ENCODE measurements at regions of chr11 and their contacts with region 1.

Region 1: GRCh38 chr11:78645226-78646202 is 70.8 kb upstream of the NARS2 start:
- DNase-seq: peak; percentile 72
- H3K4me3 Mint-ChIP-seq: no peak overlapping the region
- H3K27ac Mint-ChIP-seq: no peak overlapping the region
- H3K4me1 Mint-ChIP-seq: peaks cover 45% of the 10 kb centered on the region
- H3K27me3 Mint-ChIP-seq: peaks cover 1% of the 10 kb centered on the region

Region 2: DNA sequence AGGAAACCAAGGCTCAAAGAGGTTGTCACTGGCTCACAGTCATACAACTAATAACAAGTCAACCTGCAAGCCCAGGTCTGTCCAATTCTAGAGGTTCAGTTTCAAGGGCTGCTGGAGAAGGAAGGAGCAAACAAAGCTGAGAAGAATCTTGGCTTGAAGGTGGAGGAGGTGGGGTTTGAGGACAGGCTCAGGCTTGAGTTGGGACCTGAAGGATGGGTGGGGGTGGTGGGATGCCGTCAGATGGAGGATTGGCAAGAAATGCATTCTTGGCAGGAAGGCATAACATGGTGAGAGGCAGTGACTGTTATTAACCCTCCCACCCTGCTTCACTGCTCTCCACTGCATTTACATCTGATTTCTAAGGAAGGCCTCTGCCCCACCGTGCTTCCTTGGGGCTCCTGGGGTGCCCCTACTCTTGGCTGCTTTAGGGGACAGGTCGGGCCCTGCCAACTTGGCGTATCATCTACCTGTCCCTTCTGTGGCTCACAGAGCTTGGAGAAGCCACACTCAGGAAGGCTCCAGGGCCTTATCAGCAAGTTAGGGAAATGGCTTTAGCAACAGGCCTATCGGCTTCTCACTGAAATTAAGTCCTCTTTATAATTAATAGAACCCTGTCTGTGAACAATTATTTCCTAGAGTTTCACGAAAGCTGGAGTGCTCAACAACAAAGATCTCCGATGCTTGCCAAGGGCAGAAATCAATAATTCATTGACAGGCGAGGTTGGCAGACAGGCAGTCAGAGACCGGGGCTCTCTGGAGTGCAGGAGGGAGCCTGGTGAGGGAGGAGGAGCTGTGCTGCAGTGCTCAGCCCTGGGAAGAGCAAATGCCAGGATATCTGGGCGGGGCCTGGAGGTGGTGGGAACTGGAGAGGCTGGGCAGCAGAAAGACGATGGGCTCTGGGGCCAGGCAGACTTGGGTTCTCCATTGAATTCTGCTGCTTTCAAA is 14.1 kb after region 1 on chr11:
- CTCF ChIA-PET with region 1: interaction called, 51 read pairs
- POLR2A ChIA-PET with region 1: no interaction called
- intact Hi-C with region 1: no loop called
- DNase-seq: no peak
- H3K4me3 Mint-ChIP-seq: no peak overlapping the region
- H3K27ac Mint-ChIP-seq: no peak overlapping the region
- H3K4me1 Mint-ChIP-seq: no peaks in the 10 kb centered on the region
- H3K27me3 Mint-ChIP-seq: peaks cover 3% of the 10 kb centered on the region

Region 3: GRCh38 chr11:78722786-78723185 is 77.3 kb after region 1 on chr11:
- CTCF ChIA-PET with region 1: interaction called, 167 read pairs
- POLR2A ChIA-PET with region 1: no interaction called
- intact Hi-C with region 1: no loop called
- DNase-seq: no peak
- H3K4me3 Mint-ChIP-seq: no peak overlapping the region
- H3K27ac Mint-ChIP-seq: no peak overlapping the region
- H3K4me1 Mint-ChIP-seq: no peaks in the 10 kb centered on the region
- H3K27me3 Mint-ChIP-seq: no peaks in the 10 kb centered on the region

Region 4: GRCh38 chr11:78961247-78961646 is 315.7 kb after region 1 on chr11:
- CTCF ChIA-PET with region 1: interaction called, 14 read pairs
- POLR2A ChIA-PET with region 1: no interaction called
- intact Hi-C with region 1: no loop called
- DNase-seq: peak; percentile 9
- H3K4me3 Mint-ChIP-seq: no peak overlapping the region
- H3K27ac Mint-ChIP-seq: no peak overlapping the region
- H3K4me1 Mint-ChIP-seq: peaks cover 6% of the 10 kb centered on the region
- H3K27me3 Mint-ChIP-seq: peaks cover 18% of the 10 kb centered on the region

Region 5: GRCh38 chr11:78973876-78974275 is 328.4 kb after region 1 on chr11:
- CTCF ChIA-PET with region 1: no interaction called
- POLR2A ChIA-PET with region 1: no interaction called
- intact Hi-C with region 1: no loop called
- DNase-seq: no peak
- H3K4me3 Mint-ChIP-seq: no peak overlapping the region
- H3K27ac Mint-ChIP-seq: no peak overlapping the region
- H3K4me1 Mint-ChIP-seq: no peaks in the 10 kb centered on the region
- H3K27me3 Mint-ChIP-seq: peaks cover 4% of the 10 kb centered on the region

Region 6: DNA sequence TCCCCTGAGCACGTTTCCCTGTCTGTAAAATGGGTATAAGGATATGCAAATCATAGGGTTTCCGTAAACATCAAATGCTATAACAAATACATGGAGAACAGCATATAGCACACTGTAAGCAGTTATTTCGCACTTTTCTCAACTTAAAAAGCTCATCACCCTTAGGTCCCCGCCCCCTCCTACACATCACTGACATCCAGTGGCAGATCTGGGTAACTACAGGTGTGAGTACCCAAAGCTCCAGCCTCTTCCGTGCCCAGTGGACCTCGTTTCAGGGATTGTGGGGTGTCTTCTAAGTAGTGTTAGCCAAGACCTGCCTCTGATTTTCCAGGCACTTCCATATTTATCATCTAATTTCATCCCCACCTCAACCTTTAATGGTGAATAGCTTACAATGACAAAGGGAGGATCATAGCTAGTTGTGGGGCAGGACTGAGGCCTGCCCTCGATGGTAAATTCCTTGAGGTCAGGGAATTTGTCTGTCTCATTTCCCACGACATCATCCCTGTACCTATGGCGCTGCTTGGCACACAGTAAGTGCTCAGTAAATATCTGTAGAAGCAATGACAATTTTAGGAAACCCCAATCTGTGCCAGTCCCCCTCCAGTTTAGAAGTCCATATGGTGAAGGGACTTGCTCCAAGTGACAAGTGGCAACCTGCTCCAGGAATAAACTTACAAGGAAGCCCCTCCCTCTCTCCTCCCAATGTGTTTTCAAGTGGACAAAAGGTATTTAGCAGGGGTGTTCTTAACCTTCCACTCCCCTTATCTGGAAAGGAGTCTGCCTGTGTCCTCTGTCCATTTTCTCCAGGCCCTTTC is 454.8 kb after region 1 on chr11:
- CTCF ChIA-PET with region 1: interaction called, 71 read pairs
- POLR2A ChIA-PET with region 1: no interaction called
- intact Hi-C with region 1: loop called (anchors 1 kb)
- DNase-seq: peak; percentile 49
- H3K4me3 Mint-ChIP-seq: no peak overlapping the region
- H3K27ac Mint-ChIP-seq: no peak overlapping the region
- H3K4me1 Mint-ChIP-seq: no peaks in the 10 kb centered on the region
- H3K27me3 Mint-ChIP-seq: peaks cover 8% of the 10 kb centered on the region